B cell (primary cell): ENCODE measurements at regions of chr10 and their contacts with region 1.

Region 1: GRCh38 chr10:102503281-102504220 is at the start of gene SUFU:
- DNase-seq: peak; percentile 99
- ATAC-seq: peak; percentile 72
- H3K4me3 ChIP-seq: peak within 1 kb of the TSS; percentile 86 to 99 (median 92)
- H3K4me3 Mint-ChIP-seq: no peak within 1 kb of the TSS
- H3K27ac ChIP-seq: peak within 1 kb of the TSS; percentile 71 to 78
- H3K27ac Mint-ChIP-seq: peak within 1 kb of the TSS; percentile 86
- H3K4me1 ChIP-seq: peaks cover 24 to 28% of the 10 kb centered on the region in 2 donors
- H3K4me1 Mint-ChIP-seq: peaks cover 25% of the 10 kb centered on the region
- H3K27me3 ChIP-seq: no peaks in the 10 kb centered on the region
- H3K27me3 Mint-ChIP-seq: no peaks in the 10 kb centered on the region
- CTCF ChIP-seq: peak; percentile 93
- total RNA-seq, gene SUFU: 13.3 and 16.7 TPM in 2 replicates

Region 2: GRCh38 chr10:102055647-102056419 is 447.7 kb before region 1 on chr10 and contains the start of gene ARMH3:
- CTCF ChIA-PET with region 1: no interaction called
- POLR2A ChIA-PET with region 1: no interaction called
- intact Hi-C with region 1: loop called (anchors 2 kb)
- DNase-seq: peak; percentile 94
- ATAC-seq: peak; percentile 91
- H3K4me3 ChIP-seq: peak within 1 kb of the TSS; percentile 76 to 99 (median 93)
- H3K4me3 Mint-ChIP-seq: peak within 1 kb of the TSS; percentile 99
- H3K27ac ChIP-seq: peak within 1 kb of the TSS; percentile 75 to 80
- H3K27ac Mint-ChIP-seq: peak within 1 kb of the TSS; percentile 98
- H3K4me1 ChIP-seq: peaks cover 15 to 26% of the 10 kb centered on the region in 2 donors
- H3K4me1 Mint-ChIP-seq: peaks cover 36% of the 10 kb centered on the region
- H3K27me3 ChIP-seq: no peaks in the 10 kb centered on the region
- H3K27me3 Mint-ChIP-seq: no peaks in the 10 kb centered on the region
- CTCF ChIP-seq: no peak
- total RNA-seq, gene ARMH3: 36.2 and 40.7 TPM in 2 replicates

Region 3: GRCh38 chr10:102245101-102245931 is 258.2 kb before region 1 on chr10 and contains the start of gene GBF1:
- CTCF ChIA-PET with region 1: no interaction called
- POLR2A ChIA-PET with region 1: no interaction called
- intact Hi-C with region 1: loop called (anchors 1 kb)
- DNase-seq: peak; percentile 98
- ATAC-seq: peak; percentile 86
- H3K4me3 ChIP-seq: peak within 1 kb of the TSS; percentile 80 to 99 (median 98)
- H3K4me3 Mint-ChIP-seq: peak within 1 kb of the TSS; percentile 94
- H3K27ac ChIP-seq: peak within 1 kb of the TSS; percentile 86 to 90
- H3K27ac Mint-ChIP-seq: peak within 1 kb of the TSS; percentile 38
- H3K4me1 ChIP-seq: peaks cover 50 to 51% of the 10 kb centered on the region in 2 donors
- H3K4me1 Mint-ChIP-seq: peaks cover 56% of the 10 kb centered on the region
- H3K27me3 ChIP-seq: peaks cover 0 to 31% (median 27%) of the 10 kb centered on the region in 4 experiments
- H3K27me3 Mint-ChIP-seq: peaks cover 23% of the 10 kb centered on the region
- CTCF ChIP-seq: no peak
- total RNA-seq, gene GBF1: 39.3 and 41.2 TPM in 2 replicates

Region 4: DNA sequence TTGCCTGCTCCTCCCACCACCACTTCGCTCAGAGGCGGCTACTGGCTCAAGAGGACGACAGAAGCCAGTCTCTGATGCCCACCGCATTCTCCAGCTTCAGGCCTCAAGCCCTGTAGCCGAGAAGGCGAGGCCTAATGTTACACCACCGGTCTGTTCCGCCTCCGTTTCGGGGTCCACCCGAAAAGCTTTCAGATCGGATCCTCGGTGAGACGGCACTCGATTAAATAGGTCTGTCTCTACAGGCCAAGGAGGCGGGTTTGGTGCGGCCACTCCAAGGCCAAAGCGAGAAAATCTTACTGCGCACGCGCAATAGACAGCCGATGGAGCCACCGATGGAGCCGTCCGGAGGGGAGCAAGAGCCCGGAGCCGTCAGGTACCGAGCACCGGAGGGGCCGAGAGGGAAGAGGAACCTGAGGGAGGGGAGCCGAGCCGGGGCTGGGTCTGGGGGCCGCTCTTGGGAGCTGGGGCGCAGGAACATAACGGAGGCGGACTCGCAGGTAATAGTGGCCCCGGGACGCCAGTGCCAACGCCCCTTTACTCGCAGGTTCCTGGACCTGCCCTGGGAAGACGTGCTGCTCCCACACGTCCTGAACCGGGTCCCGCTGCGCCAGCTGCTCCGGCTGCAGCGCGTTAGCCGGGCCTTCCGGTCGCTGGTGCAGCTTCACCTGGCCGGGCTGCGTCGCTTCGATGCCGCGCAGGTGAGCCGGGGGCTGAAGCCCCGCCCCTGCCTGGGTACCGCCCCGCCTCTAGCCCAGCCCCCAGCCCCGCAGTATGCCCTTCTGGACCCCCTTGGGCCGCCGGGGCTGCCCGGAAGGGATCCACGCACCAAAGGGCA is 82.5 kb before region 1 on chr10 and contains the start of gene FBXL15:
- CTCF ChIA-PET with region 1: interaction called, 4 read pairs
- POLR2A ChIA-PET with region 1: interaction called, 6 read pairs
- intact Hi-C with region 1: loop called (anchors 1 kb)
- DNase-seq: peak; percentile 98
- ATAC-seq: peak; percentile 78
- H3K4me3 ChIP-seq: peak within 1 kb of the TSS; percentile 63 to 92 (median 89)
- H3K4me3 Mint-ChIP-seq: peak within 1 kb of the TSS; percentile 99
- H3K27ac ChIP-seq: peak within 1 kb of the TSS; percentile 39 to 62
- H3K27ac Mint-ChIP-seq: peak within 1 kb of the TSS; percentile 99
- H3K4me1 ChIP-seq: peaks cover 32 to 34% of the 10 kb centered on the region in 2 donors
- H3K4me1 Mint-ChIP-seq: peaks cover 38% of the 10 kb centered on the region
- H3K27me3 ChIP-seq: peaks cover 0 to 33% (median 21%) of the 10 kb centered on the region in 4 experiments
- H3K27me3 Mint-ChIP-seq: peaks cover 16% of the 10 kb centered on the region
- CTCF ChIP-seq: no peak
- total RNA-seq, gene FBXL15: 15.5 and 17.0 TPM in 2 replicates

Region 5: GRCh38 chr10:102461187-102462054 is 42.1 kb before region 1 on chr10:
- CTCF ChIA-PET with region 1: interaction called, 3 read pairs
- POLR2A ChIA-PET with region 1: interaction called, 3 read pairs
- intact Hi-C with region 1: loop called (anchors 1 kb)
- DNase-seq: peak; percentile 95
- ATAC-seq: peak; percentile 99
- H3K4me3 ChIP-seq: peak overlapping the region; percentile 34 to 76 (median 68)
- H3K4me3 Mint-ChIP-seq: peak overlapping the region; percentile 85
- H3K27ac ChIP-seq: peak overlapping the region; percentile 17 to 71
- H3K27ac Mint-ChIP-seq: peak overlapping the region; percentile 76
- H3K4me1 ChIP-seq: peaks cover 17 to 23% of the 10 kb centered on the region in 2 donors
- H3K4me1 Mint-ChIP-seq: peaks cover 29% of the 10 kb centered on the region
- H3K27me3 ChIP-seq: peaks cover 0 to 4% (median 0%) of the 10 kb centered on the region in 4 experiments
- H3K27me3 Mint-ChIP-seq: no peaks in the 10 kb centered on the region
- CTCF ChIP-seq: no peak

Region 6: DNA sequence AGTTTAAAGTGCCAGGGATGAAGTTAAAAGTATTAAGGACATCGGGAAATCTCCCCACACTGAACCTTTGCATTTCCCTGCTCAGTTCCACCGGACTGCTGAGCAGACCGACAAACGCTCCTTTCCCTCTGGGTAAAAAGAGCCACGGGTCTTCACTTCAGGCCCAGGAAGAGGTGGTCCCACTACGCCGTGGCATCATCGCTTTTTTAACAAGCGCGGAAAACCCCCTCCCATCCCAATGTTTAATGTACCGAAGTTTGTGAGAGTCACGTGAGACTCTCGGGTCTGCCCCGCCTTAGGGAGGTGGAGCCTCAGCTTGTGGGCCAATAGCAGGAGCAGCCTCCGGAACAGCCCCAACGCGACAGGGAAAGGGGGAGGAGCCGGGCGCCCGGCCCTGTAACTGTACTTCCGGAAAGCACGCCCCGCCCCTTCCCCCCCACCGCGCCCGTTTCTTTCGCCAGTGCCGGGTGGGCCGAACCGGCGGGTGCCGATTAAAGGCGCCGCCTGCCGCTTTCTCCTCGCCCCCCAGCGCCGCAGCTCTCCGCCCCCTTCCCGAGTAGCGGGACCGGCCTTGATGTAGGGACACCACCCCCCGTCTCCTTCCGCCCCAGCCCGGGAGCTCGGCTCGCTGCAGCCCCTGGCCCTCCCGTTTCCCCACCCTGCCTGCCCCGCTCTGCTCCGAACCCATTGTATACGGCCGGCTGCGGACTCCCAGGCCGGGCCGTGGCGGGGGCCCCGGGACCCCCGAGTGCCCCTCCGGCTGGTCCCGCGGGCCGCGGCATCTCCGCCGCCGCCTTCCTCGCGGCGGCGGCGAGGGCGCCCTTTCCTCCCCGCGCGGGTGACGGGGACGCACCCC is 138.6 kb after region 1 on chr10:
- CTCF ChIA-PET with region 1: interaction called, 7 read pairs
- POLR2A ChIA-PET with region 1: interaction called, 10 read pairs
- intact Hi-C with region 1: loop called (anchors 1 kb)
- DNase-seq: peak; percentile 98
- ATAC-seq: peak; percentile 64
- H3K4me3 ChIP-seq: peak overlapping the region; percentile 74 to 89 (median 77)
- H3K4me3 Mint-ChIP-seq: peak overlapping the region; percentile 93
- H3K27ac ChIP-seq: peak overlapping the region; percentile 93 to 97
- H3K27ac Mint-ChIP-seq: peak overlapping the region; percentile 95
- H3K4me1 ChIP-seq: peaks cover 11 to 21% of the 10 kb centered on the region in 2 donors
- H3K4me1 Mint-ChIP-seq: peaks cover 23% of the 10 kb centered on the region
- H3K27me3 ChIP-seq: no peaks in the 10 kb centered on the region
- H3K27me3 Mint-ChIP-seq: no peaks in the 10 kb centered on the region
- CTCF ChIP-seq: no peak

Region 7: GRCh38 chr10:103192451-103193106 is 689.0 kb after region 1 on chr10:
- CTCF ChIA-PET with region 1: no interaction called
- POLR2A ChIA-PET with region 1: no interaction called
- intact Hi-C with region 1: loop called (anchors 5 kb)
- DNase-seq: peak; percentile 75
- ATAC-seq: peak; percentile 56
- H3K4me3 ChIP-seq: peak overlapping the region; percentile 70 to 93 (median 92)
- H3K4me3 Mint-ChIP-seq: peak overlapping the region; percentile 99
- H3K27ac ChIP-seq: peak overlapping the region; percentile 86 to 87
- H3K27ac Mint-ChIP-seq: peak overlapping the region; percentile 98
- H3K4me1 ChIP-seq: peaks cover 20 to 29% of the 10 kb centered on the region in 2 donors
- H3K4me1 Mint-ChIP-seq: peaks cover 40% of the 10 kb centered on the region
- H3K27me3 ChIP-seq: no peaks in the 10 kb centered on the region
- H3K27me3 Mint-ChIP-seq: no peaks in the 10 kb centered on the region
- CTCF ChIP-seq: no peak